ENCODE measurements at regions of chr5 and their contacts with region 1.

Region 1: DNA sequence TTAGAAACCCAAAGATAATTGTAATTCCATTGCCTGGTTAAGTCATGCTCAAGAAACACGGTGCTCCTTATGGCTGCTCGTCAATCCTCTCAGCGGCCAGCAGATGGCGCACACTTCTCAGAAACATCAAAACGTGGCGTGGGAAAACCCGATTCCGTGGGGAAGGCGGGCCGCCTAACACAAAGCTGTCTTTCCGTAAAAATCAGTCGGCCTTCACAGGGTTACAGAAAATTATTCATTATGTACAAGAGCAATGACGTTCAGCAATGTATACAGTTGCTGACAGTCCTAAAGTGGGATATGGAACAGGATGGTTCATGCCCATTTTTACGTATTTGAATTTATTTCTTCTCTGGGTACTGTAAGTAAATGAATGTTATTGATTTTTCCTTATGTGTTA is 83.5 kb downstream of the PDE4D start:
- DNase-seq: peak; percentile 17 to 83 (median 40)
- ATAC-seq: peak; percentile 48
- H3K4me3 ChIP-seq: no peak overlapping the region
- H3K4me3 Mint-ChIP-seq: no peak overlapping the region
- H3K27ac ChIP-seq: no peak overlapping the region
- H3K27ac Mint-ChIP-seq: no peak overlapping the region
- H3K4me1 ChIP-seq: peaks cover 3% of the 10 kb centered on the region
- H3K4me1 Mint-ChIP-seq: peaks cover 5% of the 10 kb centered on the region
- H3K27me3 ChIP-seq: peaks cover 0 to 6% of the 10 kb centered on the region in 2 experiments
- H3K27me3 Mint-ChIP-seq: peaks cover 34% of the 10 kb centered on the region
- CTCF ChIP-seq: peak; percentile 96

Region 2: GRCh38 chr5:59640411-59640810 is 169.6 kb before region 1 on chr5:
- CTCF ChIA-PET with region 1: no interaction called
- POLR2A ChIA-PET with region 1: no interaction called
- intact Hi-C with region 1: no loop called
- DNase-seq: no peak
- ATAC-seq: no peak
- H3K4me3 ChIP-seq: no peak overlapping the region
- H3K4me3 Mint-ChIP-seq: no peak overlapping the region
- H3K27ac ChIP-seq: no peak overlapping the region
- H3K27ac Mint-ChIP-seq: no peak overlapping the region
- H3K4me1 ChIP-seq: no peaks in the 10 kb centered on the region
- H3K4me1 Mint-ChIP-seq: peaks cover 6% of the 10 kb centered on the region
- H3K27me3 ChIP-seq: no peaks in the 10 kb centered on the region
- H3K27me3 Mint-ChIP-seq: no peaks in the 10 kb centered on the region
- CTCF ChIP-seq: no peak

Region 3: DNA sequence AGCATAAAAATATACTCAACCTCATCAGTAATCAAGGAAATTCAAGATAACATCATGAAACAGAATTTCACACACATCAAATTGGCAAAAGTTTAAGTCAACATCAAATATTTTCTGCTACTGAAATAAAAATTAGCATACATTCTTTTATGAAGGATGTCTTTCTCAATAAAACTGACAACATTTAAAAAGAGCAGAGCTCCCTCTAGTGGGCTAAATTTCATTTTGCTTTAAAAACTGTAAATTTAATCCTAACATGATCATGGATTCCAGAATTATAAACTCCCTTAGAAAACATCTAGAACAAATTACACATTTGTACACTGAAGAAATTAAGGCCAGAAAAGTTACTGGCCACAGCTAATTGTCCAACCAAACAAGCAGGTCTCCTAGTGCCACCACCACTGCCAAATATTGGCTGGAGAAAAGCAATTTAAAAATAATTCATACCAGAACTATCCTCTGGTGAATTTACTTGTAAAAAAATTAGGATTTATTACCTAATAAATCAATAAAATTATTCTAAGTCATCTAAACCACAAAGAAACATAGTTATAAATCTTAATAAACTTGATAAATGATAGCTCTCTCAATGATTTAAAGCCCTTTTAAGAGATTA is 858.8 kb after region 1 on chr5:
- CTCF ChIA-PET with region 1: no interaction called
- POLR2A ChIA-PET with region 1: no interaction called
- intact Hi-C with region 1: loop called (anchors 2 to 5 kb)
- DNase-seq: peak in 3 of 14 experiments; percentile 40 to 52 (median 42)
- ATAC-seq: no peak
- H3K4me3 ChIP-seq: no peak overlapping the region
- H3K4me3 Mint-ChIP-seq: no peak overlapping the region
- H3K27ac ChIP-seq: no peak overlapping the region
- H3K27ac Mint-ChIP-seq: no peak overlapping the region
- H3K4me1 ChIP-seq: no peaks in the 10 kb centered on the region
- H3K4me1 Mint-ChIP-seq: no peaks in the 10 kb centered on the region
- H3K27me3 ChIP-seq: no peaks in the 10 kb centered on the region
- H3K27me3 Mint-ChIP-seq: no peaks in the 10 kb centered on the region
- CTCF ChIP-seq: peak; percentile 92

Measured in CD4-positive, alpha-beta T cell (primary cell).